Endothelial cell of umbilical vein (primary cell): ENCODE measurements at regions of chr6 and their contacts with region 1.

Region 1: DNA sequence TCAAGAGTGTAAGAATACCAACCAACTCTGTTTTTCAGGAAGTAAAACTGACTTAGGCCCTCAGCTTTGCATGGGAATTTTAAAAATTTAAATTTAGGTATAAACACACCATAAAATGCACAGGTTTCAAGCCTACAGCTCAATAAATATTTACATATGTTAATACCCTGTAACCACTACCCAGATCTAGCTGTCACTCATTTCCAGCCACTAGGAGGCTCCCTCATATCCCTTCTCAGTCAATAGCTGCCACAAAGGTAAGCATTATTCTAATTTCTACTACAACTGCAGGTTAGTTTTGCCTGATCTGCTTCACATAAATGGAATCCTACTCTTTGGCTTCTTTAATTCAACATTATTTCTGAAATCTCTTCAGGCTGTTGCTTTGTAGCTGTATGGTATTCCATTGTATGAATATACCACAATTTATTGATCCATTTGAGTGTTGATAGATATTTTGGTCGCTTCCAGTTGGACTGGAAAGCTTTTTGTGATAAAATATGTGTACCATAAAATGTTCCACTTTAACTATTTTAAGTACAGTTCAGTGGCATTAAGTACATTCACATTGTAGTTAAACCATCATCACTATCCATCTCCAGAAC is 32.5 kb upstream of the MEI4 start:
- DNase-seq: peak; percentile 38
- H3K4me3 ChIP-seq: no peak overlapping the region
- H3K27ac ChIP-seq: no peak overlapping the region
- H3K4me1 ChIP-seq: no peaks in the 10 kb centered on the region
- H3K27me3 ChIP-seq: no peaks in the 10 kb centered on the region
- CTCF ChIP-seq: peak; percentile 47 to 67
- POLR2A ChIP-seq: no peak

Region 2: GRCh38 chr6:77594285-77594684 is 26.1 kb before region 1 on chr6:
- CTCF ChIA-PET with region 1: interaction called, 10 read pairs
- POLR2A ChIA-PET with region 1: no interaction called
- dilution Hi-C with region 1: no loop called
- intact Hi-C with region 1: no loop called
- DNase-seq: no peak
- H3K4me3 ChIP-seq: no peak overlapping the region
- H3K27ac ChIP-seq: no peak overlapping the region
- H3K4me1 ChIP-seq: no peaks in the 10 kb centered on the region
- H3K27me3 ChIP-seq: no peaks in the 10 kb centered on the region
- CTCF ChIP-seq: no peak
- POLR2A ChIP-seq: no peak

Region 3: GRCh38 chr6:77633993-77634715 is 13.8 kb after region 1 on chr6:
- CTCF ChIA-PET with region 1: interaction called, 15 read pairs
- POLR2A ChIA-PET with region 1: no interaction called
- dilution Hi-C with region 1: no loop called
- intact Hi-C with region 1: no loop called
- DNase-seq: no peak
- H3K4me3 ChIP-seq: no peak overlapping the region
- H3K27ac ChIP-seq: no peak overlapping the region
- H3K4me1 ChIP-seq: no peaks in the 10 kb centered on the region
- H3K27me3 ChIP-seq: no peaks in the 10 kb centered on the region
- CTCF ChIP-seq: no peak
- POLR2A ChIP-seq: no peak

Region 4: GRCh38 chr6:77814119-77814518 is 193.7 kb after region 1 on chr6:
- CTCF ChIA-PET with region 1: no interaction called
- POLR2A ChIA-PET with region 1: no interaction called
- dilution Hi-C with region 1: no loop called
- intact Hi-C with region 1: no loop called
- DNase-seq: no peak
- H3K4me3 ChIP-seq: no peak overlapping the region
- H3K27ac ChIP-seq: no peak overlapping the region
- H3K4me1 ChIP-seq: no peaks in the 10 kb centered on the region
- H3K27me3 ChIP-seq: no peaks in the 10 kb centered on the region
- CTCF ChIP-seq: no peak
- POLR2A ChIP-seq: no peak

Region 5: GRCh38 chr6:77926198-77926752 is 305.9 kb after region 1 on chr6:
- CTCF ChIA-PET with region 1: interaction called, 10 read pairs
- POLR2A ChIA-PET with region 1: no interaction called
- dilution Hi-C with region 1: no loop called
- intact Hi-C with region 1: no loop called
- DNase-seq: peak; percentile 6
- H3K4me3 ChIP-seq: no peak overlapping the region
- H3K27ac ChIP-seq: no peak overlapping the region
- H3K4me1 ChIP-seq: no peaks in the 10 kb centered on the region
- H3K27me3 ChIP-seq: no peaks in the 10 kb centered on the region
- CTCF ChIP-seq: peak in 1 of 2 donors; percentile 2
- POLR2A ChIP-seq: no peak

Region 6: DNA sequence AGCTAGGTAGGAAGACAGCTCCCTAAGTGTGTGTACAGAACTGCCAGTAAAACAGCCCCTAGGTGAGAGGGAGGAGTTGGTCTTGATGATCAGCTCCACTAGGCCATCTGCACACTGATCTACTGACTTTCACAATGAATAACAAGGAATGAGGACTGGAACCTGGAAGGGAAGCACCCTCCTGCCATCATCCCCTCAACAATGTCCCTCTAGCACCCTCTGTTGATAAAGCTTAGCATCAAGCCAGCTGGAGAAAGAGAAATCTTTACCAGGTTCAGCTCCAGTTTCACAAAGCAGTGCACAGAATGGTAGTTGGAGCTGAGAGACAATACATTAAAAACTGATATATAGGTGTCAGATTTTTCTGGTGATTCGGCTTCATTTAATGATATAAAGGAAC is 1189.8 kb after region 1 on chr6:
- CTCF ChIA-PET with region 1: interaction called, 94 read pairs
- POLR2A ChIA-PET with region 1: no interaction called
- dilution Hi-C with region 1: no loop called
- intact Hi-C with region 1: loop called (anchors 1 kb)
- DNase-seq: peak; percentile 60
- H3K4me3 ChIP-seq: no peak overlapping the region
- H3K27ac ChIP-seq: no peak overlapping the region
- H3K4me1 ChIP-seq: no peaks in the 10 kb centered on the region
- H3K27me3 ChIP-seq: peaks cover 0 to 2% of the 10 kb centered on the region in 2 experiments
- CTCF ChIP-seq: peak; percentile 57 to 64
- POLR2A ChIP-seq: no peak